H1 (cell line): ENCODE measurements at regions of chr12 and their contacts with region 1.

Region 1: DNA sequence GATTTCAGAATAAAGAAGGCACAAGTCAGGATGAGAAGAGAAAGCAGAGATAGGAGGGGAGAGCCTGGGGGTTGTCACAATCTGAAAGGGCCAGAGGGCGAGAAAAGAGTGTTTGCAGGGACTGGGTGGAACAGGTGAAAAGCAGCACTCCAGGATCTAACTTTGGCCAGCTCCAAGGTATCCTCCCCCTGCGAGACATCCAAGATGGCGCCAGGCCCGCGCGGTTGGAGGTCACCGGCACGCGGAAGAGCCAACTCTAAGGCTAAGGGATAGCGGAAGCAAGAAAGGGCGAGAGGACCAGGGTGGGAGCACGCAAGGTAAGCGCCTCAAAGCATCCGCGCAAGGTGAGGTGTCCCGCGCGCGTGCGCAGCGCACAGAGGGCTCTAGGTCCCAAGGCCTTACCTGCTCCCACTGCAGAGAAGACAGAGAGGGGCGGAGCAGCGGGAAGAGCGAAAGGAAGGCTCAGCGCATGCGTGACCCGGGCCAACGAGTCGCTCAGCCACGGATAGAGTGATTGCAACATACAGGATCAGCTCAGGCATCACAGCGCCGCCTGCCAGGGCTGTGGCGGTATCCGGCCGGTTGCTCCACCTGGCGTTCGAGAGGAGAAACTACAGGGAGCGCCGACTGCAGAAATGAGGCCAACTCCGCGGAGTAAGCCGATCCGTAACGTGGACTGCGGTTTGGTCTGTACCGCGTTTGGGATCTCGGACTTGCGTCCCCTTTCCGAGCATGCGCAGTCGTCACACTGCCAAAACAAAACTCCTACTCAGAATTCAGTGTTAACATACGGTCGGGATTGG is at the start of gene ATP5MC2:
- DNase-seq: peak; percentile 96 to 99
- H3K4me3 ChIP-seq: peak within 1 kb of the TSS; percentile 63 to 93 (median 87)
- H3K27ac ChIP-seq: peak within 1 kb of the TSS; percentile 98
- H3K4me1 ChIP-seq: peaks cover 2 to 16% (median 7%) of the 10 kb centered on the region in 4 experiments; a peak in 6 of 7 replicates
- H3K27me3 ChIP-seq: no peaks in the 10 kb centered on the region
- CTCF ChIP-seq: peak; percentile 100
- EP300 ChIP-seq: peak; percentile 5 to 42; a peak in 2 of 3 replicates
- POLR2A ChIP-seq: peak; percentile 74 to 96
- RAD21 ChIP-seq: peak; percentile 66 to 84
- total RNA-seq, gene ATP5MC2: 401 and 408 TPM in 2 replicates

Region 2: GRCh38 chr12:53431187-53431586 is 244.7 kb before region 1 on chr12:
- CTCF ChIA-PET with region 1: no interaction called
- POLR2A ChIA-PET with region 1: no interaction called
- DNase-seq: no peak
- H3K4me3 ChIP-seq: no peak overlapping the region
- H3K27ac ChIP-seq: no peak overlapping the region
- H3K4me1 ChIP-seq: no peaks in the 10 kb centered on the region
- H3K27me3 ChIP-seq: no peaks in the 10 kb centered on the region
- CTCF ChIP-seq: no peak
- EP300 ChIP-seq: no peak
- POLR2A ChIP-seq: no peak
- RAD21 ChIP-seq: no peak

Region 3: DNA sequence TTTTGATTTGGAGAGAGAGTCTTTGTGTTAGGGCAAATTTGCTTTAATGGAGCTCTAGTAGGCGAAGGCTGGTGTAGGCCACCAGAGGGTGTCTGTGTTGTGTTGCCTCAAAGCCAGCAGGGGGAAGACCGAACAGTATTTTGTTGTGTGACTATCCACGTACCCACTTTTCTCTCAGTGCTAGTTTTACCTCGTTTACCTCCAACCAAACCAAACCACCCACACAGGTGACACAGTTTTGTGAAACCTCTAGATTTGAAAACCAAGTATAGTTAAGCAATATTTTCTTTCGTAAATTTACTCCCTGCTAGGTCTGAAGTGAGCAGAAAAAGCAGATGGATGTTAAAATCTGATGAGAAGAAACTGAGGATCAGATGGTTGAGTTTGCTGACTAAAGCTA is 132.3 kb before region 1 on chr12:
- CTCF ChIA-PET with region 1: interaction called, 10 read pairs
- POLR2A ChIA-PET with region 1: interaction called, 16 read pairs
- DNase-seq: peak in 1 of 2 experiments; percentile 47
- H3K4me3 ChIP-seq: no peak overlapping the region
- H3K27ac ChIP-seq: no peak overlapping the region
- H3K4me1 ChIP-seq: 0 out of 7 replicates have a peak, but pooled peaks cover 0 to 5% (median 0%) of the 10 kb centered on the region in 4 experiments
- H3K27me3 ChIP-seq: no peaks in the 10 kb centered on the region
- CTCF ChIP-seq: peak; percentile 82 to 99 (median 92)
- EP300 ChIP-seq: no peak
- POLR2A ChIP-seq: no peak
- RAD21 ChIP-seq: peak; percentile 82 to 86

Region 4: GRCh38 chr12:53631721-53632120 is 44.1 kb before region 1 on chr12:
- CTCF ChIA-PET with region 1: interaction called, 4 read pairs
- POLR2A ChIA-PET with region 1: interaction called, 53 read pairs
- DNase-seq: no peak
- H3K4me3 ChIP-seq: no peak overlapping the region
- H3K27ac ChIP-seq: no peak overlapping the region
- H3K4me1 ChIP-seq: peaks cover 0 to 2% (median 1%) of the 10 kb centered on the region in 4 experiments; a peak in 2 of 7 replicates
- H3K27me3 ChIP-seq: no peaks in the 10 kb centered on the region
- CTCF ChIP-seq: no peak
- EP300 ChIP-seq: no peak
- POLR2A ChIP-seq: no peak
- RAD21 ChIP-seq: no peak

Region 5: GRCh38 chr12:53659011-53659551 is 16.8 kb before region 1 on chr12:
- CTCF ChIA-PET with region 1: interaction called, 9 read pairs
- POLR2A ChIA-PET with region 1: interaction called, 246 read pairs
- DNase-seq: no peak
- H3K4me3 ChIP-seq: no peak overlapping the region; a peak in 1 of 8 replicates
- H3K27ac ChIP-seq: peak overlapping the region; percentile 16
- H3K4me1 ChIP-seq: peaks cover 3 to 13% (median 4%) of the 10 kb centered on the region in 4 experiments; a peak in 5 of 7 replicates
- H3K27me3 ChIP-seq: no peaks in the 10 kb centered on the region
- CTCF ChIP-seq: no peak
- EP300 ChIP-seq: no peak
- POLR2A ChIP-seq: peak in 1 of 2 experiments; percentile 47; a peak in 1 of 3 replicates
- RAD21 ChIP-seq: 0 out of 4 replicates have a peak, but pooled peaks of 1 of the 2 experiments have one; percentile 1

Region 6: GRCh38 chr12:53701518-53702260 is 25.8 kb after region 1 on chr12:
- CTCF ChIA-PET with region 1: interaction called, 3 read pairs
- POLR2A ChIA-PET with region 1: interaction called, 12 read pairs
- DNase-seq: peak in 1 of 2 experiments; percentile 91
- H3K4me3 ChIP-seq: no peak overlapping the region
- H3K27ac ChIP-seq: no peak overlapping the region
- H3K4me1 ChIP-seq: peaks cover 0 to 7% (median under 1%) of the 10 kb centered on the region in 4 experiments; a peak in 4 of 7 replicates
- H3K27me3 ChIP-seq: peaks cover 8 to 18% (median 16%) of the 10 kb centered on the region in 4 experiments
- CTCF ChIP-seq: peak; percentile 97 to 100 (median 98)
- EP300 ChIP-seq: no peak
- POLR2A ChIP-seq: no peak
- RAD21 ChIP-seq: peak; percentile 96 to 99